Activated naive CD4-positive, alpha-beta T cell treated with anti-CD3 and anti-CD28 coated beads, Interleukin-2, amount 10 ng/mL, durations not matched to agents 7 days and 5 days (primary cell): ENCODE measurements at regions of chr2 and their contacts with region 1.

Region 1: GRCh38 chr2:174771631-174772471 is 7.6 kb upstream of the CHRNA1 start:
- DNase-seq: peak; percentile 65
- H3K4me3 Mint-ChIP-seq: no peak overlapping the region
- H3K27ac Mint-ChIP-seq: no peak overlapping the region
- H3K4me1 Mint-ChIP-seq: peaks cover 25% of the 10 kb centered on the region
- H3K27me3 Mint-ChIP-seq: peaks cover 41% of the 10 kb centered on the region

Region 2: DNA sequence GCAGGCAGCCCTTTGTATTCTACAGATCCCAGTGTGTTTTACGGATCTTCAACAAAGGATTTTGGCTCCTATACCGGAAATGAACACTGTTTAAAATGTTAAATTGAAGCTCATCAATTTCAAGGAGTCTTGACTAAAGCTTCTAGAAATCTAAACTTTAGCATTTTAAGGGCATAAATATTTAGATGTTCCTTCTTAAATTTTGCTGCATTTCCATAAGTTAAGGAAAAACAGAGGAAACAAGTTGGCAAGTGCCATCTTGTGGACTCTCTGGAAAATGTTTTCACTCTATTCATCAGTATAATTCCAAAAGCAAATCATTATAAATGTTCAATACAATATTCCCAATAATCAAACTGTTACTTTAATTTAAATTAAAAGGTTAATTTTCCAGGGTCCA is 213.8 kb after region 1 on chr2:
- CTCF ChIA-PET with region 1: interaction called, 56 read pairs
- DNase-seq: no peak
- H3K4me3 Mint-ChIP-seq: no peak overlapping the region
- H3K27ac Mint-ChIP-seq: no peak overlapping the region
- H3K4me1 Mint-ChIP-seq: no peaks in the 10 kb centered on the region
- H3K27me3 Mint-ChIP-seq: peaks cover 6% of the 10 kb centered on the region

Region 3: DNA sequence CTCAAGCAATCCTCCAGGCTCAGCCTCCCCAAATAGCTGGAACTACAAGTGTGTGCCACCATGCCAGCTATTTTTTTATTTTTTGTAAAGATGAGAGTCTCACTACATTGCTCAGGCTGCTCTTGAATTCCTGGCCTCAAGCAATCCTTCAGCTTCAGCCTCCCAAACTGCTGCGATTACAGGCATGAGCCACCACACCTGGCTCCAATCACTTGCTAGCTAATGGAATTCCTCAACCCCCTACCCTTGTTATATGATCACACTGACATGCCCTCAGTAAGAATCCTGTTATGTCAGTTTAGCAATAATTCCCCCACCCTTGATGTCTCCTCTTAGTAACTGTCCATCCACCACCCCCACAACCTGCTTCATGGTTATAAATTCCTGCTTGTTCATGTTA is 221.0 kb after region 1 on chr2:
- CTCF ChIA-PET with region 1: interaction called, 53 read pairs
- DNase-seq: no peak
- H3K4me3 Mint-ChIP-seq: no peak overlapping the region
- H3K27ac Mint-ChIP-seq: no peak overlapping the region
- H3K4me1 Mint-ChIP-seq: no peaks in the 10 kb centered on the region
- H3K27me3 Mint-ChIP-seq: peaks cover 6% of the 10 kb centered on the region